ENCODE measurements at regions of chrX and their contacts with region 1.

Region 1: DNA sequence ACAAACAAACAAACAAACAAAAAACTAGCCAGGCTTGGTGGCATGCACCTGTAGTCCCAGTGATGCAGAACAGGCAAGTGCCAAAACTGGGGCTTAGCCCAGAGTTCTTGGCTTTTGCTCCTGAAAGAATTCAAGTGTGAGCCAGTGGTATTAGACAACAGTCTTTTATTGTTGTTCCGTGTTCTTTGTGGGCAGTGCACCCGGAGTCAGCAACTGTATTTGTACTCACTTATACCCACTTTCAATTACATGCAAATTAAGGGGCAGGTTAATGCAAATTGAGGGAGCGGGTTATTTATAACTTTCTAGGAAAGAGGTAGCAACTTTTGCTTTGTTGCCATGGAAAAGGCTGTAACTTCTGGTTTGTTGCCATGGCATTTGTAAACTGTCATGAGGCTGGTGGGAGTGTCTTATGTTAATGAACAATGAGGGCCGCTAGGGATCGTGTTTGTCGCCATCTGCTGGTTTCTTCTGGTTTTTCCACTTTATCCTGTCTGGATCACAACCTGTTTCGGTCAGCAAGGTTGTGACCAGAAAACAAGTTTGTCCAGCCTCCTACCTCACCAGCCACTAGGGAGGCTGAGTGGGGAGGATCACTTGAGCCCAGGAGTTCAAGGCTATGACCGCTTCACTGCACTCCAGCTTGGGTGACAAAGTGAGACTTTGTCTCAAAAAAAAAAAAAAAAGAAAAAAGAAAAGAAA is 88.8 kb upstream of the ESX1 start:
- DNase-seq: peak; percentile 87
- H3K4me3 ChIP-seq: no peak overlapping the region
- H3K27ac ChIP-seq: no peak overlapping the region
- H3K4me1 ChIP-seq: no peaks in the 10 kb centered on the region
- H3K27me3 ChIP-seq: no peaks in the 10 kb centered on the region
- CTCF ChIP-seq: peak; percentile 43 to 55
- POLR2A ChIP-seq: no peak

Region 2: GRCh38 chrX:104098151-104098808 is 245.3 kb before region 1 on chrX:
- CTCF ChIA-PET with region 1: no interaction called
- POLR2A ChIA-PET with region 1: no interaction called
- dilution Hi-C with region 1: no loop called
- intact Hi-C with region 1: no loop called
- DNase-seq: peak; percentile 74
- H3K4me3 ChIP-seq: no peak overlapping the region
- H3K27ac ChIP-seq: no peak overlapping the region
- H3K4me1 ChIP-seq: no peaks in the 10 kb centered on the region
- H3K27me3 ChIP-seq: no peaks in the 10 kb centered on the region
- CTCF ChIP-seq: peak in 1 of 2 donors; percentile 33
- POLR2A ChIP-seq: no peak

Region 3: GRCh38 chrX:104195489-104196084 is 148.0 kb before region 1 on chrX:
- CTCF ChIA-PET with region 1: interaction called, 3 read pairs
- POLR2A ChIA-PET with region 1: no interaction called
- dilution Hi-C with region 1: no loop called
- intact Hi-C with region 1: loop called (anchors 1 kb)
- DNase-seq: peak; percentile 29
- H3K4me3 ChIP-seq: no peak overlapping the region
- H3K27ac ChIP-seq: no peak overlapping the region
- H3K4me1 ChIP-seq: no peaks in the 10 kb centered on the region
- H3K27me3 ChIP-seq: no peaks in the 10 kb centered on the region
- CTCF ChIP-seq: peak in 1 of 2 donors; percentile 42
- POLR2A ChIP-seq: no peak

Region 4: DNA sequence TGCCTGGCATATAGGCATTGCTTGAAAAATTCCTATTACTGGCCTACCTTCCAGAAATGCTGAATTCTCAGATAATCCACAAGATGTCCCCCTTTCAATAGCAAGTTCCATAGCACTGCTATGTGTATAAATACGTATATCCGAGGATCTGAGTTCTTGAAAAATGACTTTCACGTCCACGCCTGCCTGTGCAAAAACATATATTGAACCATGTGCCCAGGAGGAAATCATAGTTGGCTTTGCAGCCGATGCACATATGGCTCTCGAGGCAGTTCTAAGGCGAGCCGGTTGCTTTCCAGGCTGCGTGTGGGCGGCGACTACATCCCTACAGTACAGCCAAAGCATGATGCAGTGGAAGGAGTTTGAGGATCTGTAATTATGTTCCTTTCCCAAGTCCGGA is 33.5 kb before region 1 on chrX:
- CTCF ChIA-PET with region 1: interaction called, 24 read pairs
- POLR2A ChIA-PET with region 1: no interaction called
- dilution Hi-C with region 1: no loop called
- intact Hi-C with region 1: loop called (anchors 1 kb)
- DNase-seq: peak; percentile 39
- H3K4me3 ChIP-seq: peak overlapping the region in 1 of 3 experiments; percentile 36
- H3K27ac ChIP-seq: no peak overlapping the region
- H3K4me1 ChIP-seq: peaks cover 6% of the 10 kb centered on the region
- H3K27me3 ChIP-seq: no peaks in the 10 kb centered on the region
- CTCF ChIP-seq: peak; percentile 15 to 35
- POLR2A ChIP-seq: no peak

Region 5: GRCh38 chrX:104315555-104315954 is 28.0 kb before region 1 on chrX:
- CTCF ChIA-PET with region 1: interaction called, 24 read pairs
- POLR2A ChIA-PET with region 1: no interaction called
- dilution Hi-C with region 1: no loop called
- intact Hi-C with region 1: loop called (anchors 1 kb)
- DNase-seq: peak; percentile 61
- H3K4me3 ChIP-seq: no peak overlapping the region
- H3K27ac ChIP-seq: peak overlapping the region; percentile 55
- H3K4me1 ChIP-seq: peaks cover 29% of the 10 kb centered on the region
- H3K27me3 ChIP-seq: no peaks in the 10 kb centered on the region
- CTCF ChIP-seq: no peak
- POLR2A ChIP-seq: no peak

Region 6: DNA sequence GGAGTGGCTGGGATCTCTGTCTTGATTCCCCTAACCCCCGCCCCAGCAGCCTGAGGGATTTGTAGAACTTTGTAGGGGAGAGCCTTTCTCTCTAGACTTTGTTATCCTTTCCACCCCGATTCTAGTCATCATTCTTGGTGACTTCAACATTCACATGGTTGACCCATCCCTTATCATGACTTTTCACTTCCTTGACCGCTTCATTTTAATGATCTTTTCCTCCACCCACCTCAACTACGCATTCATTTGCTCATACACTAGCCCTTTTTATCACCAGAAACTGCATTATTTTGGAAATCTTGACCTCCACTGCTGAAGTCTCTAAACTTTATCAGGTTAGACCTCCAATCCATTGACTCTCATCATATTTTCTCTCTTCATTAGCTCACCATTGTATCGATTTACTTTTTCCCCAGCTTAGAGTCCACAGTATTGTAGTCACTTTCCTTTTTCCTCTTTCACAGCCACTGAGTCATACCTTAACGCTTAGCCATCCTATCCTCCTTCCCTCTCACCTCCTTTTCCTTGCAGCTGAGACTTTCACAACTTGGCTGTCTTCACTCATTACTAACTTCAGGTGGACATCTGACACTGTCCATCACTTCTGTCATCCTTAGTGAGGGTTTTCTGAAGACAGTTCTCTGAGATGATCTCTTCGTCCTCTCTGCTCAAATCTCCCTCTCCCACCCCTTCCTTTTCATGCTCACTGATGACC is 18.6 kb before region 1 on chrX:
- CTCF ChIA-PET with region 1: interaction called, 3 read pairs
- POLR2A ChIA-PET with region 1: no interaction called
- dilution Hi-C with region 1: no loop called
- intact Hi-C with region 1: loop called (anchors 1 kb)
- DNase-seq: peak; percentile 51
- H3K4me3 ChIP-seq: no peak overlapping the region
- H3K27ac ChIP-seq: peak overlapping the region; percentile 79
- H3K4me1 ChIP-seq: peaks cover 20% of the 10 kb centered on the region
- H3K27me3 ChIP-seq: no peaks in the 10 kb centered on the region
- CTCF ChIP-seq: no peak
- POLR2A ChIP-seq: no peak

Region 7: DNA sequence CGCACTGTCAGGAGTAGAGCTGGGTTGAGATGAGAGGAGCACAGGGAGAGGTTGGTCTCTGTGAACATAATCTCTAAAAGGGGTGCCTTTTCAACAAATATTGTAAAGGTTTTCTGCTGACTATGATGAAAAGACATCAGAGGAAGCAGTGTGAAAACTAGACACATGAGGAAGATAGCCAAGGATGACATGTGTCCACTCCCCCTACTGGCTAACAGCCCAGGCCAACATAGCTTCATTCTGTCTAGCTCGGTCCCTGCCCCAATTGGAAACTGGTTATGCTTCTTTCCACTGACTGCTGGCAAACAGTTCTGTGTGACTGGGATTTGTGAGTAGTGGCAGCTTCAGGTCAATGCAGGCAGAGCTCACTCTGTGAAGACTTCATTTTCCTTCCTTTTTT is 26.5 kb after region 1 on chrX:
- CTCF ChIA-PET with region 1: no interaction called
- POLR2A ChIA-PET with region 1: no interaction called
- dilution Hi-C with region 1: no loop called
- intact Hi-C with region 1: no loop called
- DNase-seq: no peak
- H3K4me3 ChIP-seq: no peak overlapping the region
- H3K27ac ChIP-seq: no peak overlapping the region
- H3K4me1 ChIP-seq: no peaks in the 10 kb centered on the region
- H3K27me3 ChIP-seq: peaks cover 0 to 4% of the 10 kb centered on the region in 2 experiments
- CTCF ChIP-seq: no peak
- POLR2A ChIP-seq: no peak